Right cardiac atrium (tissue), 5 donors: ENCODE measurements at regions of chr11 and their contacts with region 1.

Region 1: GRCh38 chr11:27040302-27041115 is at the start of gene BBOX1:
- DNase-seq: no peak
- ATAC-seq: peak in 1 of 2 donors; percentile 26
- H3K4me3 ChIP-seq: no peak within 1 kb of the TSS
- H3K27ac ChIP-seq: no peak within 1 kb of the TSS
- H3K4me1 ChIP-seq: peaks cover 2% of the 10 kb centered on the region
- H3K27me3 ChIP-seq: no peaks in the 10 kb centered on the region
- total RNA-seq, gene BBOX1: not detected

Region 2: GRCh38 chr11:26319906-26320305 is 720.6 kb before region 1 on chr11:
- intact Hi-C with region 1: loop called in 1 of 4 experiments (anchors 10 kb)
- DNase-seq: no peak
- ATAC-seq: no peak
- H3K4me3 ChIP-seq: no peak overlapping the region
- H3K27ac ChIP-seq: no peak overlapping the region
- H3K4me1 ChIP-seq: no peaks in the 10 kb centered on the region
- H3K27me3 ChIP-seq: no peaks in the 10 kb centered on the region